ENCODE measurements at regions of chr4 and their contacts with region 1.

Region 1: GRCh38 chr4:17324386-17324830 is 187.5 kb downstream of the QDPR start:
- DNase-seq: peak; percentile 59
- H3K4me3 Mint-ChIP-seq: no peak overlapping the region
- H3K27ac Mint-ChIP-seq: no peak overlapping the region
- H3K4me1 Mint-ChIP-seq: peaks cover 9% of the 10 kb centered on the region
- H3K27me3 Mint-ChIP-seq: no peaks in the 10 kb centered on the region

Region 2: DNA sequence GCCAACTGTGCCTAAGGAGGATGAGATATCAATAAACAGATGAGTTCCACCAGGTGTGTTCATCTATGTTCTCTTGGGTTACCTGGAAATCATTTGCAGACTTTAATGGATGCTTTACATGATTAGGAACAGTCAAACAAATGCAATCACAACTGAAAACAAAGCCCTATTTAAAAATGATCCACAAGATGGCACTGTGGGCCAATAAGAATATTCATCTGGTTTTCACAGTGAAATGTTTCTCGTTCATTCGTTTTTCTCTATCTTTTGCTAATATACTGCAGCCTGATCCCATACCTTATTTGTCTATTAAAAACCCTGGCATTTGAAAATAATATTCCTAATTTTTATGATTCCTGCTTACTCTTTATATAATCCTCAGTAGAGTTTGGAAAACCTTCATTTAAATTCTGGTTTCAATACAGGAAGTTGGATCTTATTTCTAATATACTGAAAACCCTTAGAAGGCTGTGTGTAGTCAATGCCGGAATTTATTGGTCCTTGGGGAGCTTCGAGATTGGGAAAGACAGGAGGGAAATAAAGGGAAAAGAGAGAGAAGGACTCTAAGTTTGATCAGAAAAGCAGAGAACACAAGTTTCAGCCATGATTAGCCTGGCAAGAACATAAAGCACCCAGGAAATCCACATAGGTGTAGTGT is 1034.4 kb before region 1 on chr4:
- CTCF ChIA-PET with region 1: interaction called, 4 read pairs
- POLR2A ChIA-PET with region 1: no interaction called
- intact Hi-C with region 1: loop called (anchors 1 kb)
- DNase-seq: no peak
- H3K4me3 Mint-ChIP-seq: no peak overlapping the region
- H3K27ac Mint-ChIP-seq: no peak overlapping the region
- H3K4me1 Mint-ChIP-seq: peaks cover 4% of the 10 kb centered on the region
- H3K27me3 Mint-ChIP-seq: peaks cover 9% of the 10 kb centered on the region

Region 3: GRCh38 chr4:16794816-16795445 is 529.5 kb before region 1 on chr4:
- CTCF ChIA-PET with region 1: interaction called, 4 read pairs
- POLR2A ChIA-PET with region 1: no interaction called
- intact Hi-C with region 1: loop called (anchors 2 kb)
- DNase-seq: peak; percentile 33
- H3K4me3 Mint-ChIP-seq: no peak overlapping the region
- H3K27ac Mint-ChIP-seq: no peak overlapping the region
- H3K4me1 Mint-ChIP-seq: no peaks in the 10 kb centered on the region
- H3K27me3 Mint-ChIP-seq: no peaks in the 10 kb centered on the region

Region 4: GRCh38 chr4:16916719-16917337 is 407.6 kb before region 1 on chr4:
- CTCF ChIA-PET with region 1: interaction called, 9 read pairs
- POLR2A ChIA-PET with region 1: no interaction called
- intact Hi-C with region 1: loop called (anchors 2 kb)
- DNase-seq: peak; percentile 82
- H3K4me3 Mint-ChIP-seq: no peak overlapping the region
- H3K27ac Mint-ChIP-seq: no peak overlapping the region
- H3K4me1 Mint-ChIP-seq: no peaks in the 10 kb centered on the region
- H3K27me3 Mint-ChIP-seq: no peaks in the 10 kb centered on the region

Region 5: DNA sequence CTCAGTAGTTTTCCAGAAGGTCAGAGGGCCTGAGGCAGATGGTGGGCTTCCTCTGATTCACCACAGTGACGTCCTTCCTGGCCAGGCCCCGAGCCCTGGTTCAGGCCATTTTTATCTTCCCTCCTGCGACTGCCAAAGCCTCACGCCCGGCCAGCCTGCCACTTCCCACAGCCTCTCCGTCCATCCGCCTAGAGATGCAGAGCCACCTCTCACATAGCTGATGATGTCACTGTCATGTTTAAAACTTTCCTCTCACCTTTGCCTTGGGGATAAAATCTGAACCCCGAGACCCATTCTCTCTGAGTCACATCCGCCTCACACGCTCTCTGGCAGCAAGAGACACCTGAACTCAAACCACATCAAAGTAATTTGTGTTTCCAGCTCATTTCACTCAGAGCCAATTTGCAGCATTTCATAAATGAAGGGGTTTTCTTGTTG is 12.1 kb after region 1 on chr4:
- CTCF ChIA-PET with region 1: interaction called, 10 read pairs
- POLR2A ChIA-PET with region 1: no interaction called
- intact Hi-C with region 1: loop called (anchors 1 kb)
- DNase-seq: peak; percentile 87
- H3K4me3 Mint-ChIP-seq: peak overlapping the region; percentile 44
- H3K27ac Mint-ChIP-seq: peak overlapping the region; percentile 75
- H3K4me1 Mint-ChIP-seq: peaks cover 33% of the 10 kb centered on the region
- H3K27me3 Mint-ChIP-seq: no peaks in the 10 kb centered on the region

Region 6: GRCh38 chr4:17447675-17448298 is 123.4 kb after region 1 on chr4:
- CTCF ChIA-PET with region 1: interaction called, 6 read pairs
- POLR2A ChIA-PET with region 1: no interaction called
- intact Hi-C with region 1: loop called (anchors 1 kb)
- DNase-seq: peak; percentile 51
- H3K4me3 Mint-ChIP-seq: no peak overlapping the region
- H3K27ac Mint-ChIP-seq: no peak overlapping the region
- H3K4me1 Mint-ChIP-seq: no peaks in the 10 kb centered on the region
- H3K27me3 Mint-ChIP-seq: no peaks in the 10 kb centered on the region

Measured in activated CD4-positive, alpha-beta memory T cell treated with anti-CD3 and anti-CD28 coated beads for 36 hours (primary cell).